Gastrocnemius medialis (tissue), 4 donors: ENCODE measurements at regions of chr12 and their contacts with region 1.

Region 1: DNA sequence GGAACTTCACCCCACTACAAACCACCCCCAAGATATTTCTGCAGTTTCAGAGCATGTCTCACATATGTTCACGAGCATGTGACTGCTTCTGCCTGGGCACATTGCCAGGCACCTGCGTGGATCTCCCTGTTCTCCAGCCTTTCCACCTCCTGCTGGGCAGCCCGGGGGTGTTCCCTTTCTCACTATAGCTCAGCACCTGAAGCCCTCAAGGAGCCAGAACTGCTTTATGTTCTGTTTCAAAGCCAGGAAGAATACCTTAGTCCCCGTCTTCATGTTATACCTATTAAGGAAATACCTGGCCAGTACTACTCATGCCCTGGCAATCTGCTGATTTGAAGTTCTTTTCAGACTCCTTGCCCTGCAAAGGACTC is 4.2 kb upstream of the FGF6 start:
- DNase-seq: peak in 1 of 2 donors; percentile 69
- ATAC-seq: peak in 1 of 2 donors; percentile 6
- H3K4me3 ChIP-seq: no peak overlapping the region
- H3K27ac ChIP-seq: peak overlapping the region; percentile 80 to 88 (median 86)
- H3K4me1 ChIP-seq: peaks cover 34 to 44% of the 10 kb centered on the region in 2 donors
- H3K27me3 ChIP-seq: no peaks in the 10 kb centered on the region
- CTCF ChIP-seq: no peak
- POLR2A ChIP-seq: no peak

Region 2: GRCh38 chr12:4434706-4435425 is 15.0 kb before region 1 on chr12:
- in situ Hi-C with region 1: no loop called
- intact Hi-C with region 1: loop called (anchors 1 kb)
- DNase-seq: no peak
- ATAC-seq: no peak
- H3K4me3 ChIP-seq: no peak overlapping the region
- H3K27ac ChIP-seq: peak overlapping the region; percentile 77 to 88 (median 81)
- H3K4me1 ChIP-seq: peaks cover 31 to 38% of the 10 kb centered on the region in 2 donors
- H3K27me3 ChIP-seq: no peaks in the 10 kb centered on the region
- CTCF ChIP-seq: no peak
- POLR2A ChIP-seq: no peak

Region 3: GRCh38 chr12:4483885-4484823 is 34.3 kb after region 1 on chr12:
- in situ Hi-C with region 1: no loop called
- intact Hi-C with region 1: loop called (anchors 2 kb)
- DNase-seq: no peak
- ATAC-seq: peak; percentile 87 to 94
- H3K4me3 ChIP-seq: no peak overlapping the region
- H3K27ac ChIP-seq: peak overlapping the region; percentile 29 to 68 (median 52)
- H3K4me1 ChIP-seq: peaks cover 5 to 13% of the 10 kb centered on the region in 2 donors
- H3K27me3 ChIP-seq: no peaks in the 10 kb centered on the region
- CTCF ChIP-seq: no peak
- POLR2A ChIP-seq: no peak

Region 4: DNA sequence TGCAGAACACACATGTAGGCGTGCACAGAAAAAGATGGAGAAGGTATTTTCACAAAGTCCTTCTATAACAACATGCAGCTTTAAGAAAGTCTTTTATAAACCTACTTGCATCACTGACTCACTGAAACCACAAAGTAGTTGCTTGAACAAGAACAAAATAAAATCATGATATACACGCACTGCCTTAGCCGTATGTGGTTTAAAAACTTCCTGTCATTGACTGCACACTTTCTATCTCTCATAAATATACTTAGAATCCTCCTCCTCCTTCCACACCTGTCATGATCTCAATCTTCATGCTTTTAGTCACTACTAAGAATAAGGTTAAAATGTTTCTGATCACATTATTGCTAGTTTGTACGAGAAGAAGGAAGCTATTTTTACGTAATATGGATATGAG is 57.0 kb after region 1 on chr12:
- in situ Hi-C with region 1: no loop called
- intact Hi-C with region 1: loop called (anchors 5 kb)
- DNase-seq: no peak
- ATAC-seq: no peak
- H3K4me3 ChIP-seq: no peak overlapping the region
- H3K27ac ChIP-seq: no peak overlapping the region
- H3K4me1 ChIP-seq: peaks cover 9 to 11% of the 10 kb centered on the region in 2 donors
- H3K27me3 ChIP-seq: no peaks in the 10 kb centered on the region
- CTCF ChIP-seq: no peak
- POLR2A ChIP-seq: no peak

Region 5: GRCh38 chr12:4538207-4539160 is 88.6 kb after region 1 on chr12 and contains the start of gene RAD51AP1:
- in situ Hi-C with region 1: no loop called
- intact Hi-C with region 1: loop called (anchors 2 kb)
- DNase-seq: peak; percentile 87 to 90
- ATAC-seq: peak; percentile 99
- H3K4me3 ChIP-seq: peak within 1 kb of the TSS; percentile 55 to 92 (median 76)
- H3K27ac ChIP-seq: peak within 1 kb of the TSS; percentile 86 to 94 (median 92)
- H3K4me1 ChIP-seq: peaks cover 15 to 16% of the 10 kb centered on the region in 2 donors
- H3K27me3 ChIP-seq: no peaks in the 10 kb centered on the region
- CTCF ChIP-seq: no peak
- POLR2A ChIP-seq: peak; percentile 35 to 51
- total RNA-seq, gene RAD51AP1: 0.65 to 1.7 (median 1.7) TPM in 3 of 4 donors, not detected in the other